ENCODE measurements at regions of chr9 and their contacts with region 1.

Region 1: DNA sequence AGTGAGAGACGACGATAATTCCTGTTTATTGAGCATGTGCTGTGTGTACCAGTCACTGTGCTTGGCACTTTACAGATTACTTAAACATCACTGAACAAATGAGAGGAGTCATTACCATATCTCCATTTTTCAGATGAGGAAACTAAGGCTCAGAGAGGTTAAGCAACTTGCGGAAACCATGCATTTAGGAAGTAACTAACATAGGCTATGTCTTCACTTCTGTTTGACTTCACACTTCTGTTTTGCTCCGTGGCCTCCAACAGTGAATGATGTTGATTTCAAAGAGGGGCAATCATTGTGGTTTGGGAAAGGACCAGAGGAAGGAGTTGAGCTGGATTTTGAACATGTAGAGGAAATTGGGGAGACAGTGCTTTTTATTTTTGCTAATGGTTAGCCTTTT is 16.7 kb downstream of the GCNT1 start:
- DNase-seq: no peak
- ATAC-seq: no peak
- H3K4me3 ChIP-seq: no peak overlapping the region
- H3K27ac ChIP-seq: no peak overlapping the region
- H3K4me1 ChIP-seq: peaks cover 29% of the 10 kb centered on the region
- H3K27me3 ChIP-seq: no peaks in the 10 kb centered on the region
- CTCF ChIP-seq: no peak
- EP300 ChIP-seq: no peak
- POLR2A ChIP-seq: no peak
- RAD21 ChIP-seq: no peak

Region 2: GRCh38 chr9:76403352-76403751 is 72.3 kb before region 1 on chr9:
- CTCF ChIA-PET with region 1: interaction called, 3 read pairs
- POLR2A ChIA-PET with region 1: no interaction called
- RAD21 ChIA-PET with region 1: no interaction called
- SMC1A ChIA-PET with region 1: no interaction called
- in situ Hi-C with region 1: no loop called
- intact Hi-C with region 1: loop called (anchors 2 kb)
- DNase-seq: peak; percentile 55
- ATAC-seq: peak; percentile 88
- H3K4me3 ChIP-seq: no peak overlapping the region; the same call in 1 of the 2 replicates
- H3K27ac ChIP-seq: no peak overlapping the region
- H3K4me1 ChIP-seq: peaks cover 10% of the 10 kb centered on the region
- H3K27me3 ChIP-seq: no peaks in the 10 kb centered on the region
- CTCF ChIP-seq: peak; percentile 33 to 63 (median 56); a peak in 5 of 6 replicates
- EP300 ChIP-seq: no peak
- POLR2A ChIP-seq: no peak
- RAD21 ChIP-seq: peak; percentile 74

Region 3: DNA sequence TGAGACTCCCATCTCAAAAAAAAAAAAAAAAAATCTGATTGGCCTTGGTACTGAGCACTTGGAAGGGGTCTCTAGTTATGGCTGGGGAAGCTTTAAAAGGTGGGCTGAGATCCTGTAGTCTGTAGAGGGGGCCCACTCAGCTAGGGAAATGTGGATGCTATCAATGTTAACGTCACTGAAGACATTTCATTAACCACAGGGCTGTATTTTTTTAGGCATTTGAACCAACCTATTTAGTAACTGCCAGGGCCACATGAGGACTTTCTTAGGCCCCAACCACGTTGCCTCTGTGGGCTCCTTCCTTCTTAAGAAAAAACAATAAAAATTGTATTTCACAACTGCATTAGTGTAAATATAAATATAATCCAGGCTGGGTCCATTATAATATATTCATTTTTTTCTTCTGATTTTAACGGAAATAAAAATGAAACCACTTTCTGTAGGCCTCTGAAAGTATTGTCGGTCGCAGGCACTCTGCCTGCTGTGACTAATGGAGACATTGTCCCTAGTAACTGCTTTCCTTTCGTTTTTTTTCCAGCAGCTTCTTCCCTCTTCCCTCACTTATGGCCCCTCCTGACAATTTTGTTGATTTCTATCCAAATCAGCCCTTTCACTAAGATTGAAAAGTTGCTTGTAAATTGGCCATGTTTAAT is 54.9 kb after region 1 on chr9:
- CTCF ChIA-PET with region 1: no interaction called
- POLR2A ChIA-PET with region 1: no interaction called
- RAD21 ChIA-PET with region 1: no interaction called
- SMC1A ChIA-PET with region 1: no interaction called
- in situ Hi-C with region 1: no loop called
- intact Hi-C with region 1: no loop called
- DNase-seq: no peak
- ATAC-seq: no peak
- H3K4me3 ChIP-seq: no peak overlapping the region
- H3K27ac ChIP-seq: peak overlapping the region; percentile 35
- H3K4me1 ChIP-seq: peaks cover 6% of the 10 kb centered on the region
- H3K27me3 ChIP-seq: no peaks in the 10 kb centered on the region
- CTCF ChIP-seq: no peak
- EP300 ChIP-seq: no peak
- POLR2A ChIP-seq: no peak
- RAD21 ChIP-seq: no peak

Region 4: GRCh38 chr9:77433675-77434445 is 958.2 kb after region 1 on chr9:
- CTCF ChIA-PET with region 1: no interaction called
- POLR2A ChIA-PET with region 1: no interaction called
- RAD21 ChIA-PET with region 1: no interaction called
- SMC1A ChIA-PET with region 1: no interaction called
- in situ Hi-C with region 1: no loop called
- intact Hi-C with region 1: no loop called
- DNase-seq: no peak
- ATAC-seq: peak; percentile 96
- H3K4me3 ChIP-seq: no peak overlapping the region
- H3K27ac ChIP-seq: no peak overlapping the region
- H3K4me1 ChIP-seq: no peaks in the 10 kb centered on the region
- H3K27me3 ChIP-seq: no peaks in the 10 kb centered on the region
- CTCF ChIP-seq: peak; percentile 80 to 94 (median 88)
- EP300 ChIP-seq: no peak
- POLR2A ChIP-seq: no peak
- RAD21 ChIP-seq: peak; percentile 88